K562 (cell line): ENCODE measurements at regions of chr5 and their contacts with region 1.

Region 1: DNA sequence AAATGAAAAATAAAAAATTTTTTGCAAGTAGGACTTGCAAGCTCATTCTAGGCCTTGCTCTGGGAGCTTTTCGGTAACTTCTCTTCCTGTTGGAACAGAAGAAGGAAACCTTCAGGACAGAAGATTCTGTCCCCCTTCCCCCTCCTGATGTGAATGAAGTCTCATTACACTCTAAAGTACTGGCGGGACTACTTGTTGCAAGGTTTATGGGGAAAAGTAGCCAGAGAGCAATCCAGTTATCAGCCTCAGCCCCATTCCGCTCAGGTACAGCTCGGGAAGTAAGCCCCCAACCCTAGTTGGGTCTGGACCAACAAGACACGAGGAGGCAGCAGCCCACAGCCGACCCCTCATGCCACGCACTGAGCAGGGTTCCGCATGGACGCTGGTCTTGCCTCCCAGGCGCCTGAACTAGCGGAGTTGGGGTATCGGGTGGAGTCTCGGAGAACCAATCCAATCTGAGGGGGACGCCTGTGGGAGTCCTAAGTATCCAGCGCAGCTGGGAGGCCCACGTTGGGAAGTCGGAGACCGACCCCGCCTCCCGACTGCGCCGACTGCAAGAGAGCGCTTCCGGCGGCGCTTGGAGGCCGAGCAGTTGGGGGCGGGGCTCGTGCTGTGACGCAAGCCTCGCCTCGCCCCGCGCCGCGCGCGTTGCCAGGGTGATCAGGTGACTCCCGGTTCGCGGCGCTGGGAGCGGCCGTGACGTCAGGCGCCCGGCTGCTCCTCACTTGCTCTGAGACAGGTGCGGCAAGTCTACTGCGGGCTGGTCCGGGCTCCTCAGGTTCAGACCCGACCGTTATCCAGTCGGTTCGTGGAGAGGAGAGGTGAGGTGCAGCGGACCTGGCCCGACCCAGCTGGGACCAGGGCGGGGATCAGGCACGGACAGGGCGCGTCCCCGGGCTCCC is at the start of gene CYSTM1:
- DNase-seq: peak; percentile 92 to 98 (median 94)
- ATAC-seq: peak; percentile 86
- H3K4me3 ChIP-seq: peak within 1 kb of the TSS; percentile 78
- H3K27ac ChIP-seq: peak within 1 kb of the TSS; percentile 88
- H3K4me1 ChIP-seq: peaks cover 25 to 28% of the 10 kb centered on the region in 2 experiments
- H3K27me3 ChIP-seq: no peaks in the 10 kb centered on the region
- CTCF ChIP-seq: 0 out of 6 replicates have a peak, but pooled peaks of 1 of the 3 experiments have one; percentile 7
- EP300 ChIP-seq: peak; percentile 16; the same call in 1 of the 2 replicates
- POLR2A ChIP-seq: peak; percentile 84
- RAD21 ChIP-seq: no peak
- polyA plus RNA-seq, gene CYSTM1: 363 to 422 TPM

Region 2: GRCh38 chr5:140011297-140011802 is 163.4 kb before region 1 on chr5:
- CTCF ChIA-PET with region 1: no interaction called
- POLR2A ChIA-PET with region 1: no interaction called
- in situ Hi-C with region 1: no loop called
- intact Hi-C with region 1: no loop called
- DNase-seq: peak in 1 of 4 experiments; percentile 14
- ATAC-seq: no peak
- H3K4me3 ChIP-seq: no peak overlapping the region
- H3K27ac ChIP-seq: no peak overlapping the region
- H3K4me1 ChIP-seq: no peaks in the 10 kb centered on the region
- H3K27me3 ChIP-seq: peaks cover 10 to 16% of the 10 kb centered on the region in 2 experiments; a peak in 2 of 5 replicates
- CTCF ChIP-seq: no peak
- EP300 ChIP-seq: no peak
- POLR2A ChIP-seq: no peak
- RAD21 ChIP-seq: no peak

Region 3: DNA sequence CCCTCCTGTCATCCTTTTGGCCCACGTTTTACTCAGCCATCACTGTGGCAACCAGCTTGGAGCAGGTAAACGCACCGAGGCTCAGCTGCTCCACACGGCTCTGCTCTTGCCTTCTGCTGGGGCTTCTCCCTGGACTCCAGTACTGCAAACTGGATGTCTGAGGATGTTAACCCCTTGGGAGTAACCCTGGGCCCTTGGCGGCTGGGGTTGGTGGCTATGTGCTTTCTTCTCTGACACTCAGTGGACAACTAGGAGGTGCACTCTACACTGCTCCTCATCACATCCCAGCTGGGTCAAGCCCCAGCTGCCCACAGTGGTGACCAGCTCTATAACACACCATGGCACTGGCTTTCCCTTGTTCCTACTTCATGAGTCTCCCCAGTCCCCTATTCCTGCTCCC is 11.9 kb before region 1 on chr5:
- CTCF ChIA-PET with region 1: no interaction called
- POLR2A ChIA-PET with region 1: interaction called, 11 read pairs
- in situ Hi-C with region 1: no loop called
- intact Hi-C with region 1: no loop called
- DNase-seq: no peak
- ATAC-seq: no peak; the same call in 2 of the 3 replicates
- H3K4me3 ChIP-seq: no peak overlapping the region
- H3K27ac ChIP-seq: no peak overlapping the region
- H3K4me1 ChIP-seq: peaks cover 0 to 14% of the 10 kb centered on the region in 2 experiments; a peak in 3 of 5 replicates
- H3K27me3 ChIP-seq: no peaks in the 10 kb centered on the region; a peak in 1 of 5 replicates
- CTCF ChIP-seq: no peak
- EP300 ChIP-seq: no peak
- POLR2A ChIP-seq: no peak
- RAD21 ChIP-seq: no peak

Region 4: GRCh38 chr5:140220032-140220697 is 45.4 kb after region 1 on chr5:
- CTCF ChIA-PET with region 1: no interaction called
- POLR2A ChIA-PET with region 1: interaction called, 18 read pairs
- in situ Hi-C with region 1: no loop called
- intact Hi-C with region 1: loop called (anchors 1 kb)
- DNase-seq: no peak
- ATAC-seq: no peak
- H3K4me3 ChIP-seq: no peak overlapping the region
- H3K27ac ChIP-seq: peak overlapping the region; percentile 76; the same call in 2 of the 3 replicates
- H3K4me1 ChIP-seq: peaks cover 39 to 88% of the 10 kb centered on the region in 2 experiments
- H3K27me3 ChIP-seq: no peaks in the 10 kb centered on the region
- CTCF ChIP-seq: no peak
- EP300 ChIP-seq: no peak
- POLR2A ChIP-seq: no peak
- RAD21 ChIP-seq: no peak

Region 5: GRCh38 chr5:140346348-140347101 is 171.8 kb after region 1 on chr5 and contains the start of gene HBEGF:
- CTCF ChIA-PET with region 1: no interaction called
- POLR2A ChIA-PET with region 1: no interaction called
- in situ Hi-C with region 1: loop called (anchors 10 kb)
- intact Hi-C with region 1: loop called (anchors 2 kb)
- DNase-seq: peak; percentile 92 to 97 (median 94)
- ATAC-seq: peak; percentile 94
- H3K4me3 ChIP-seq: peak within 1 kb of the TSS; percentile 42
- H3K27ac ChIP-seq: no peak within 1 kb of the TSS
- H3K4me1 ChIP-seq: peaks cover 13 to 23% of the 10 kb centered on the region in 2 experiments; a peak in 4 of 5 replicates
- H3K27me3 ChIP-seq: no peaks in the 10 kb centered on the region
- CTCF ChIP-seq: peak; percentile 77 to 82 (median 80)
- EP300 ChIP-seq: 0 out of 2 replicates have a peak, but pooled peaks have one; percentile 9
- POLR2A ChIP-seq: peak; percentile 49; the same call in 1 of the 2 replicates
- RAD21 ChIP-seq: peak; percentile 36 to 54; a peak in 3 of 4 replicates
- polyA plus RNA-seq, gene HBEGF: 0.11 to 0.29 TPM

Region 6: DNA sequence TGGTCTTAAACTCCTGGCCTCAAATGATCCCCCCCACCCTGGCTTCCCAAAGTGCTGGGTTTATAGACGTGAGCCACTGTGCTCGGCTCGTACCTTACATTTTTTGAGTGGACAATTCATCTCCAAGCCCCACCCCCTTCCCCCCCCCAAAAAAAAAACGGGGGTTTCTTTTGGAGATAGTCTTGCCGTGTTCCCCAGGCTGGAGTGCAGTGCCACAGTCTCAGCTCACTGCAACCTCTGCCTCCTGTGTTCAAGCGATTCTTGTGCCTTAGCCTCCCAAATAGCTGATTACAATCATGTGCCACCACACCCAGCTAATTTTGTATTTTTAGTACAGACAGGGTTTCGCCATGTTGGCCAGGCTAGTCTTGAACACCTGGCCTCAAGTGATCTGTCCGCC is 258.2 kb after region 1 on chr5:
- CTCF ChIA-PET with region 1: no interaction called
- POLR2A ChIA-PET with region 1: no interaction called
- in situ Hi-C with region 1: no loop called
- intact Hi-C with region 1: no loop called
- DNase-seq: peak in 2 of 4 experiments; percentile 28 to 48
- ATAC-seq: peak; percentile 76
- H3K4me3 ChIP-seq: no peak overlapping the region
- H3K27ac ChIP-seq: peak overlapping the region; percentile 42; the same call in 2 of the 3 replicates
- H3K4me1 ChIP-seq: peaks cover 8 to 15% of the 10 kb centered on the region in 2 experiments
- H3K27me3 ChIP-seq: no peaks in the 10 kb centered on the region
- CTCF ChIP-seq: no peak
- EP300 ChIP-seq: no peak
- POLR2A ChIP-seq: no peak
- RAD21 ChIP-seq: no peak

Region 7: GRCh38 chr5:140557136-140557805 is 382.6 kb after region 1 on chr5 and contains the start of gene SRA1:
- CTCF ChIA-PET with region 1: no interaction called
- POLR2A ChIA-PET with region 1: no interaction called
- in situ Hi-C with region 1: no loop called
- intact Hi-C with region 1: loop called (anchors 10 kb)
- DNase-seq: peak; percentile 83 to 95 (median 91)
- ATAC-seq: peak; percentile 94
- H3K4me3 ChIP-seq: peak within 1 kb of the TSS; percentile 77
- H3K27ac ChIP-seq: peak within 1 kb of the TSS; percentile 86
- H3K4me1 ChIP-seq: peaks cover 23 to 27% of the 10 kb centered on the region in 2 experiments
- H3K27me3 ChIP-seq: no peaks in the 10 kb centered on the region
- CTCF ChIP-seq: peak in 1 of 3 experiments; percentile 13; a peak in 1 of 6 replicates
- EP300 ChIP-seq: no peak
- POLR2A ChIP-seq: peak; percentile 96
- RAD21 ChIP-seq: no peak
- polyA plus RNA-seq, gene SRA1: 24.1 to 33.6 TPM